ENCODE measurements at regions of chr3 and their contacts with region 1.

Region 1: GRCh38 chr3:114942773-114943172 is 204.3 kb downstream of the ZBTB20 start:
- DNase-seq: no peak
- ATAC-seq: no peak

Region 2: DNA sequence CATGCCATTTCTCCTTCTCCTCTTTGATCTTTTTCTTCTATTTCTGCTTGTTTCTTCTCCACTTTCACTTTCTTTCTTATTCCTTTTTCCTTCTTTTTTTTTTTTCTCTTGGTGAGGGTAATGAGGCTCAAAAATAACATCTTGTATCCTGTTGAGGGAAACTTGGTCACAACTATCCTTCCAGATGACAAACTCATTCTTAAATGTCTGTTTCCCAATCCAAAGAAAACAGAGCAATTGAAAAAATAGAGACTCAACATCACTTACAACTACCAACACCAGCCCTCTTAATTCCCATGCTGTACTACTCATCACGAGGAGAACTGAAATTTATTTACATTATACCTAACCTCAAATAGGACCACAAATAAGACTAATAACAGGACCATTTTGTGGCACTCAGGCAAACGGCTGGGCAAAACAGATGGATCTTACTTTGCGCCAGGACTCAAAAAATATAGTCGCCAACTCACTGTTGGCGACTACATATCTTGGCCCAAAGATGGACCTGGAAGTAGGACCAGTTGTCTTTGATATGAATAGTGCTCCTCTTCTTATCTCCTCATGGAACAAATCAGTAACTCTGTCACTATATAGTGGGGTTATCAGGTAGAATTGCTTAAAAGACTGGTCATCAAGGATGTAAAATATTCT is 139.6 kb before region 1 on chr3:
- intact Hi-C with region 1: no loop called
- DNase-seq: no peak
- ATAC-seq: peak; percentile 53

Region 3: DNA sequence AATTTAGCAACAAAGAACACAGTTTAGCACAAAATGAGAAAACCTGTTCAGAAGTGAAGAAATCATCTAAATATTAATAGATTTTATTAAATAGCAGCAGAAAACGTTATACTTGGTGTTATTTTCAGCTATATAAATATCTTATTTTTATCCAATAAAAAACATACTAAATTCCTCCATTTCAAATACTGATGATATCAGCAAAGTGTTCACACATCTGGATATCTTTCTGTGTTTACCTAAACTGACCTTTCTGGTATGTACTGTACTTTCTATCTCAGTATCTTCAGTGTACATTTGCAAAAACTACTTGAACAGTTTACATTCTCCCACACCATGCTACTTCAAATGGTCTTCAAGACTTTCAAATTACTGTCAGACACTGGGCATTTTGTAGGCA is 24.4 kb after region 1 on chr3:
- intact Hi-C with region 1: loop called (anchors 2 kb)
- DNase-seq: no peak
- ATAC-seq: no peak

Region 4: GRCh38 chr3:115022835-115023398 is 80.1 kb after region 1 on chr3:
- intact Hi-C with region 1: no loop called
- DNase-seq: no peak
- ATAC-seq: no peak

Measured in Right ventricle myocardium superior (tissue), 1 donor.